Prostate gland (tissue), 2 donors: ENCODE measurements at regions of chr14 and their contacts with region 1.

Region 1: DNA sequence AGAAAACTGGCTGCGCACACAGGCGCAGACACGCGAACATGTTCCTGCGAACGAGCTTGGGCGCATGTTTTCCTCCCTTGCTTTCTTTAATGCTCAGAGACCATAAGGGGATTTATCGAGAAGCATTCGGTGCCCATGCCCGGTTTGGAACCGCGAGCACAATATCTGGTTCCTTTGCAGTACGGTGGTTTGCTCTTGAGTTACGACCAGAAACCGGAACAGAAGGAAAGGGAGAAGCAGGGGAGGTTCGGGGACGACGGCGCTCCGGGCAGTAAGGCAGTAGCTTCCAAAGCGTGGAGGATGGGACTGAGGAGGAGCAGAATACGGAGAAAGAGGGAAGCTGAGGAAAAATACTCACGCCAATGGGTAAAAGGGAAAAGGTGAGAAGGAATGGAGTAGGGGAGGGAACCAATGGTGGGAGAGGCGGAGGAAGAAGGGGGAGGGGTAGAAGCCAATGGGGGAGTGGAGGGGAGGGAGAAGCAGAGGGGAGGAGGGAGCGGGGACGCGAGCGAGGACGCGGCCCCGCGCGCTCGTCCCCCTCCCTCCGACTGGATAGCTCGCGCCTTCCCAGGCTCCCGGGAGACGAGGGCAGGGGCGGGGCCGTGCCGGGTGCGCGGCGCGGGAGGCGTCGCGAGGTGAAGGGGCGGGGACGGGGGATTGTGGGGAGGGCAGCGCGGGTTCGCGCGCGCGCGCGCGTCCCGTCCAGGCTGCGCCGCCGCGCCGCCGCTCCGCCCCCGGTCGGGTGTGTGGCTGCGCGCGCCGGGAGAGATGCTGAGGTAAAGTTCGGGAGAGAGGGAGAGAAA is 625 bp upstream of the ARHGAP5 start:
- DNase-seq: peak; percentile 95
- H3K4me3 ChIP-seq: peak overlapping the region; percentile 94 to 97
- H3K27ac ChIP-seq: peak overlapping the region; percentile 99 to 100
- H3K4me1 ChIP-seq: no peaks in the 10 kb centered on the region
- H3K27me3 ChIP-seq: no peaks in the 10 kb centered on the region
- CTCF ChIP-seq: no peak
- POLR2A ChIP-seq: peak; percentile 73

Region 2: GRCh38 chr14:32202998-32203882 is 126.8 kb after region 1 on chr14 and contains the start of gene RNU6-8:
- intact Hi-C with region 1: loop called (anchors 2 kb)
- DNase-seq: peak; percentile 89
- H3K4me3 ChIP-seq: peak within 1 kb of the TSS; percentile 49 to 58
- H3K27ac ChIP-seq: peak within 1 kb of the TSS; percentile 84 to 85
- H3K4me1 ChIP-seq: no peaks in the 10 kb centered on the region
- H3K27me3 ChIP-seq: no peaks in the 10 kb centered on the region
- CTCF ChIP-seq: peak in 1 of 4 experiments; percentile 20
- POLR2A ChIP-seq: peak; percentile 47
- total RNA-seq, gene RNU6-8: not detected

Region 3: GRCh38 chr14:32507029-32507984 is 430.8 kb after region 1 on chr14:
- intact Hi-C with region 1: no loop called
- DNase-seq: no peak
- H3K4me3 ChIP-seq: no peak overlapping the region
- H3K27ac ChIP-seq: no peak overlapping the region
- H3K4me1 ChIP-seq: no peaks in the 10 kb centered on the region
- H3K27me3 ChIP-seq: no peaks in the 10 kb centered on the region
- CTCF ChIP-seq: no peak
- POLR2A ChIP-seq: no peak

Region 4: DNA sequence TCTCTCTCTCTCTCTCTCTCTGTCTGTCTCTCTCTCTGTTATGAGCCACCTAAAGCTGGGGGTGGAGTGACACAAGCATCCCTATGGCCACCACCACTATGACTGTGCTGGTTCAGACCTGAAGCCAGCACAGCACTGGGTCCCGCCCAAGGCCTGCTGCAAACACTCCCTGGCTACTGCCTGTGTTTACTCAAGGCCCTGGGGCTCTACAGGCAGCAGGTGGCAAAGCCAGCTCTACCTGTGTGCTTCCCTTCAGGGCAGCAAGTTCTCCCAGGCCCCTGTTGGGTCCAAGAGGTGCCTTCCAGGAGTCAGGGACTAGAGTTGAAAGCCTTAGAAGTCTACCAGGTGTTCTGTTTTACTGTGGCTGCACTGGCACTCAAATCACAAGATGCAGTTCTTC is 669.0 kb after region 1 on chr14:
- intact Hi-C with region 1: no loop called
- DNase-seq: no peak
- H3K4me3 ChIP-seq: no peak overlapping the region
- H3K27ac ChIP-seq: no peak overlapping the region
- H3K4me1 ChIP-seq: no peaks in the 10 kb centered on the region
- H3K27me3 ChIP-seq: no peaks in the 10 kb centered on the region
- CTCF ChIP-seq: no peak
- POLR2A ChIP-seq: no peak